ENCODE measurements at regions of chr10 and their contacts with region 1.

Region 1: DNA sequence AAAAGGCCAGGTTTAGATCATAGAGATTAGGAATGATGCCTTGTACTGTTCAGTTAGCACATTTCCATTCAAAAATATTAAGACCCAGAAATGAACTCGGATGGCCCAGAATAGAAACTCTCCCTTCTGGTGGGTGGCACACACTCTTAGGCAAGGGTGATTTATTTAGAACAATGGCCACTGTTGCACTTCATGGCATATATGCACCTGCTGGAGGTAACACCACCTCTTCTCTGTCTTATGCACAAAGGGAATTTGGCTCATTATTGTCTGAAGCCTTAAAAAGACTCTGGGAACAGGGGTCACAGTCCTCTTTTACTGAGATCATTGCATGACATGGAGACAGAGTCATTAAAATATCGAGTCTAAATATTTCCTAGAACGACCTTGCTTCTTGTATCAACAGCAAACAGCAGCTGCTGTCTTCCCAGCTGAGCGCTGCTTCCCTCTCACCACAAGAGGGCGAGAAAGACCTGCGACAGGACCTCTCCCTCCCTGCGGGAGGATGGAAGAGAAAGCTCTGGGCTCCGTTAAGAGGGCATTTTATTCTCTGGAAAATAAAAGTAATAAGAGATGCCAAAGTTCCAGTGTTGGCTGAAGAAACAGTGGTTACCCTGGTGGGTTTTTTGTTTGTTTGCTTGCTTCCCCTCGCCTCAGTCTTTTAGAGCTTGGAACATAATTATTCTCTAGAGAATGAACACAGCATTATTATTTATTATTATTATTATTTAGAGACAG is 13.6 kb upstream of the BAMBI start:
- DNase-seq: peak; percentile 84
- H3K4me3 Mint-ChIP-seq: no peak overlapping the region
- H3K27ac Mint-ChIP-seq: no peak overlapping the region
- H3K4me1 Mint-ChIP-seq: peaks cover 7% of the 10 kb centered on the region
- H3K27me3 Mint-ChIP-seq: peaks cover 30% of the 10 kb centered on the region

Region 2: GRCh38 chr10:28628184-28628893 is 35.4 kb before region 1 on chr10:
- CTCF ChIA-PET with region 1: interaction called, 3 read pairs
- intact Hi-C with region 1: loop called (anchors 1 kb)
- DNase-seq: peak; percentile 83
- H3K4me3 Mint-ChIP-seq: no peak overlapping the region
- H3K27ac Mint-ChIP-seq: no peak overlapping the region
- H3K4me1 Mint-ChIP-seq: peaks cover 4% of the 10 kb centered on the region
- H3K27me3 Mint-ChIP-seq: peaks cover 10% of the 10 kb centered on the region

Region 3: DNA sequence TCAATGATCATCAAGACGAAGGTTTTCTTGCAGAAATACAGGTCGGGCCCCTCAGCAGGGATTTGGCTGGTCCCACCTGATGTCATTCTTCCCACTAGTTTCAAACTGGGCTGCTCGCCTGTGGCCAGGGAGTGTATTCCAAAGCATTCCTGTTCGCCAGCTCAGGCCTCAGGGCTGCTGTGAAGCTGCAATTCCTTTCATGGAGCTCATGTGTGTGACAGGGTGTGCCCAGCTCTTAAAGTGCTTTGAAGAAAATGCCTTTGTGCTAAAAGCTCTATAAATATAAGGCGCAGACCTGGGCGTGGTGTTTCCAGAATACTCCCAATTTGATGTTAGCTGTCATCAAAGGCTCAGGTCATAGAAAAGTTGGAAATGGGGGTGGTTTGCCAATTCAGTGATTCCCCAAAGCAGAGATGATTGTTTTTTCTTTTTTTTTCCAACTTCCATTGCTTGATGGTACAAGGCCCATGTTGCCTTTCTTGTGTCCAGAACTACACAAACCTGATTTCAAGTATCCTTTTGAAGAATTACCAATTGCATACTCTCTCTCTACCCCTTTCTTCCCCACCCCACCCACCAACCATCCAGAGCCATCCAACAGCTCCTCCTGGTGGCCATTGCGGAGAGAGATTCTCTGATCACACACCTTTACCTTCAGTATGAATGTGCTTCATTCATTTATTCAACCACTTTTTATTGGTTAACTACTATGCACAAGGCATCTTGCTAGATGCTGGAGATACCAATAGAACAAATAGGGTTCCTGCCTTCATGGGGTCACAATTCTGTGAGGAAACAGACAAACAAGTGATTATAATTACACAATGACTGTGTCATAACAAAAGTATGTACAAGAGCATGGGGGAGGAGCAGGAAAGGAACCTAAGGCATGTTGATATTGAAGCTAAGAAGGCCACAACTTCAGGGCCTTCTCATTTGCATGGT is 327.9 kb after region 1 on chr10:
- CTCF ChIA-PET with region 1: interaction called, 25 read pairs
- intact Hi-C with region 1: loop called (anchors 1 kb)
- DNase-seq: peak; percentile 60
- H3K4me3 Mint-ChIP-seq: no peak overlapping the region
- H3K27ac Mint-ChIP-seq: no peak overlapping the region
- H3K4me1 Mint-ChIP-seq: no peaks in the 10 kb centered on the region
- H3K27me3 Mint-ChIP-seq: peaks cover 8% of the 10 kb centered on the region

Region 4: GRCh38 chr10:29131952-29132820 is 468.4 kb after region 1 on chr10:
- CTCF ChIA-PET with region 1: no interaction called
- intact Hi-C with region 1: loop called (anchors 1 kb)
- DNase-seq: no peak
- H3K4me3 Mint-ChIP-seq: no peak overlapping the region
- H3K27ac Mint-ChIP-seq: no peak overlapping the region
- H3K4me1 Mint-ChIP-seq: no peaks in the 10 kb centered on the region
- H3K27me3 Mint-ChIP-seq: peaks cover 16% of the 10 kb centered on the region

Region 5: DNA sequence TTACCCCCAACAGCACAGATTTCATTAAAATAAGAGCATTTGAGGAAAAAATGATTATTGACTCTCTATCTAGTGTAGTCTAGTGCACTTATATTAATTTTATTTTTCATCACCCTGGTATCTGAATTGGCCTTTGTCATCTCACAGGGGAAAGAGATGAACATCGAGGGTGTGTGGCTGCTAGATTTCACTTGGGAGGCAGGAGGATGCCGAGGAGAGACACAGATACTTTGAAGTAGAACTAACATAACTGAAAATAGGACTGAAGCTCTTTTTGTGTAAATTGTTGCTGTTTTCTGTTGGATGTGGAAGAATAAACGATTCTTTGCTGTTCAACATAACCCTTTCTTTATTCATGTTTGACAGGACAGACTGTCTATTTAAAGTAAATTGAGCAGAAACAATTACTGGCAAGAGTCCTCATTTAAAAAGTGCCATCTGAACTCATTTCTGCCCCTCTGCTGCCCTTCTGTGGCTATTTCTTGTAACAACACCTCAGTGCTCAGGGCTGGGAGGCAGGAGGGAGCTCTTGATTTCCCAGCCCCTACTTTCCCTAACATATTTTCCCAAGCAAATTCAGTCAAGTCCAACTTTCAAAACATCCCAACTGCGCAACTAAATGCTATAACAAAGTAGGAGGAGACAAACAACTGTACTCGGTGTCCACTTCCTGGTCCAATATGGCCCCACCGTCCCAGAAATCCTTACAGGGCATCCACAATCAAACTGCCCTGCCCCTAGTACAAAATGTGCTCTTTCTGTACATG is 640.7 kb after region 1 on chr10:
- CTCF ChIA-PET with region 1: interaction called, 9 read pairs
- intact Hi-C with region 1: loop called (anchors 1 kb)
- DNase-seq: peak; percentile 53
- H3K4me3 Mint-ChIP-seq: peak overlapping the region; percentile 16
- H3K27ac Mint-ChIP-seq: no peak overlapping the region
- H3K4me1 Mint-ChIP-seq: peaks cover 4% of the 10 kb centered on the region
- H3K27me3 Mint-ChIP-seq: peaks cover 33% of the 10 kb centered on the region

Measured in activated naive CD4-positive, alpha-beta T cell treated with anti-CD3 and anti-CD28 coated beads for 36 hours (primary cell).